K562 (cell line): ENCODE measurements at regions of chrX and their contacts with region 1.

Region 1: GRCh38 chrX:64152857-64153256 is 52.7 kb downstream of the AMER1 start:
- DNase-seq: no peak
- ATAC-seq: no peak
- H3K4me3 ChIP-seq: no peak overlapping the region
- H3K27ac ChIP-seq: no peak overlapping the region
- H3K4me1 ChIP-seq: no peaks in the 10 kb centered on the region
- H3K27me3 ChIP-seq: no peaks in the 10 kb centered on the region
- CTCF ChIP-seq: no peak
- EP300 ChIP-seq: no peak
- POLR2A ChIP-seq: no peak
- RAD21 ChIP-seq: no peak

Region 2: GRCh38 chrX:64205735-64206491 is 53.1 kb after region 1 on chrX:
- CTCF ChIA-PET with region 1: no interaction called
- POLR2A ChIA-PET with region 1: no interaction called
- in situ Hi-C with region 1: no loop called
- intact Hi-C with region 1: loop called (anchors 5 kb)
- DNase-seq: peak; percentile 89 to 93 (median 92)
- ATAC-seq: peak; percentile 92
- H3K4me3 ChIP-seq: peak overlapping the region; percentile 59
- H3K27ac ChIP-seq: peak overlapping the region; percentile 55
- H3K4me1 ChIP-seq: peaks cover 3 to 24% of the 10 kb centered on the region in 2 experiments; a peak in 4 of 5 replicates
- H3K27me3 ChIP-seq: no peaks in the 10 kb centered on the region
- CTCF ChIP-seq: peak; percentile 4 to 9 (median 7); a peak in 1 of 6 replicates
- EP300 ChIP-seq: no peak
- POLR2A ChIP-seq: peak; percentile 71
- RAD21 ChIP-seq: no peak

Region 3: DNA sequence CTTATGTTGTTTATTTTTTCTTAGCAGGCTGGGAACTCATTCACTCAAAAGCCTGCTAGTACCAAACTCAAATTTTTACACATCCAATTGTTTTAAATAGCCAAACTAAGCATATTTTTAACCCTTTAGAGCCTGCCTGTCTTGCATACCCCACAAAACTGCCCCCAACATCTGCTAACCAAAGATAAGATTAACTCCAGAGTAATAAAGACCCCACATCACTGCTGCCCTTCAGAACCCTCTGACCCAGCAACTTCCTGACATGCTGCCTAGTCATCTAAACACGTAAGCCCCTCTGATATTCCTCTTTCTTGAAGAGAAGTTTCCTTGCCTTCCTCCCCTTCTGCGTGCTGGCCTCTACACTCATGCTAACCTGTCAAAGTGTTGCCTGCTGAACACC is 138.3 kb after region 1 on chrX:
- CTCF ChIA-PET with region 1: no interaction called
- POLR2A ChIA-PET with region 1: no interaction called
- in situ Hi-C with region 1: no loop called
- intact Hi-C with region 1: no loop called
- DNase-seq: peak in 2 of 4 experiments; percentile 9 to 23
- ATAC-seq: no peak
- H3K4me3 ChIP-seq: no peak overlapping the region
- H3K27ac ChIP-seq: peak overlapping the region; percentile 46; the same call in 2 of the 3 replicates
- H3K4me1 ChIP-seq: no peaks in the 10 kb centered on the region; a peak in 2 of 5 replicates
- H3K27me3 ChIP-seq: no peaks in the 10 kb centered on the region
- CTCF ChIP-seq: no peak
- EP300 ChIP-seq: peak; percentile 13; the same call in 1 of the 2 replicates
- POLR2A ChIP-seq: no peak
- RAD21 ChIP-seq: no peak

Region 4: DNA sequence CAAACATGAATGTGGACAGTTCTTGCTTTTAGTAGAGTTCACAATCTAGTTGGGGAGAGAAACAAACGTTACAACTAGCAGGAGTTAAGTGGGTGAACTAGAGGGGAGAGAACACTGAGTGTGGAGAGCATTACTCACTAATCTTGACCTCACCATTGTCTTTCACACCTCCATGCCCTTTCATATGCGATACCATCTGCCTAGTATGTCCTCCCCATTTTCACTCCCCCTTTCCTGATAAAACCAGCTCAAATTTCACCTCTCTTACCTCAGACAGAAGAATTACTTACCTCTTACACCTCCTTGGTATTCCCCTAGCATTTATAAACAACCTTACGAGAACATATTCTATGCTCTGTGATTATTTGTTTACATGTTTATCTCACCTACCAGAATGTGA is 1328.1 kb after region 1 on chrX:
- CTCF ChIA-PET with region 1: no interaction called
- POLR2A ChIA-PET with region 1: no interaction called
- in situ Hi-C with region 1: no loop called
- intact Hi-C with region 1: no loop called
- DNase-seq: no peak
- ATAC-seq: no peak
- H3K4me3 ChIP-seq: no peak overlapping the region
- H3K27ac ChIP-seq: no peak overlapping the region
- H3K4me1 ChIP-seq: no peaks in the 10 kb centered on the region
- H3K27me3 ChIP-seq: no peaks in the 10 kb centered on the region
- CTCF ChIP-seq: no peak
- EP300 ChIP-seq: no peak
- POLR2A ChIP-seq: no peak
- RAD21 ChIP-seq: no peak